Activated T-helper 2 cell treated with anti-CD3 and anti-CD28 coated beads, Interferon-gamma antibody, Interleukin-2, Interleukin-4, amounts not matched to agents 10 μg/mL and 5 μg/mL and 100 μg/mL, durations not matched to agents 14 hours and 24 hours and 36 hours (primary cell): ENCODE measurements at regions of chr2 and their contacts with region 1.

Region 1: DNA sequence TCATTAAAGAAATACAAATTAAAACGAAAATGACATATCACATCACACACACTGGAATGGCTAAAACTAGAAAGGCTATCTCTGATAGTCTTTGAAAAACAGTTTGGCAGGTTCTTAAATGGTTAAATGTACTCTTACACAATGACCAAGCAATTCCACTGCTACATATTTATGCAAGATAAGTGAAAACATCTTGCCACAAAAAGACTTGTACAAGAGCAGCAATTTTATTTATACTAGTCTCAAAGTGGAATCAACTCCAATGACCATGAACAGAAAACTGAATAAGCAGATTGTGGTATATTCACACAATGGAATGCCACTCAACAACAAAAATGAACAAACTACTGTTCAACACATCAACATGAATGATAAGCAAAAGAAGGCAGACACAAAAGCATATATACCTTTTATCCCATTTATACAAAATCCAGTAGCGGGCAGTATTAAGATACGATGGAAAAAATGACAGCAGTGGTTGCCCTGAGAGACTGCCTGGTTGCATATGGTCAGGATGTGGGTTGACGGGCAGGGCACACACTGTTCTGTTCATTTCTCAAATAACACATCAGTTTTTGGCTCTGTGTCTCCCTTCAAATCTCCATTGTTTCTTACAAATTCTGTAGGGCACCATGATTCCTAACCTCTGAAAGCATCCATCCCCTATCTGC is 25.4 kb downstream of the SP100 start:
- DNase-seq: peak; percentile 48
- H3K4me3 Mint-ChIP-seq: peak overlapping the region; percentile 46
- H3K27ac Mint-ChIP-seq: peak overlapping the region; percentile 85
- H3K4me1 Mint-ChIP-seq: peaks cover 50% of the 10 kb centered on the region
- H3K27me3 Mint-ChIP-seq: no peaks in the 10 kb centered on the region

Region 2: GRCh38 chr2:230234845-230235244 is 206.5 kb before region 1 on chr2:
- intact Hi-C with region 1: loop called (anchors 1 kb)
- DNase-seq: no peak
- H3K4me3 Mint-ChIP-seq: peak overlapping the region; percentile 73
- H3K27ac Mint-ChIP-seq: peak overlapping the region; percentile 98
- H3K4me1 Mint-ChIP-seq: peaks cover 55% of the 10 kb centered on the region
- H3K27me3 Mint-ChIP-seq: no peaks in the 10 kb centered on the region

Region 3: DNA sequence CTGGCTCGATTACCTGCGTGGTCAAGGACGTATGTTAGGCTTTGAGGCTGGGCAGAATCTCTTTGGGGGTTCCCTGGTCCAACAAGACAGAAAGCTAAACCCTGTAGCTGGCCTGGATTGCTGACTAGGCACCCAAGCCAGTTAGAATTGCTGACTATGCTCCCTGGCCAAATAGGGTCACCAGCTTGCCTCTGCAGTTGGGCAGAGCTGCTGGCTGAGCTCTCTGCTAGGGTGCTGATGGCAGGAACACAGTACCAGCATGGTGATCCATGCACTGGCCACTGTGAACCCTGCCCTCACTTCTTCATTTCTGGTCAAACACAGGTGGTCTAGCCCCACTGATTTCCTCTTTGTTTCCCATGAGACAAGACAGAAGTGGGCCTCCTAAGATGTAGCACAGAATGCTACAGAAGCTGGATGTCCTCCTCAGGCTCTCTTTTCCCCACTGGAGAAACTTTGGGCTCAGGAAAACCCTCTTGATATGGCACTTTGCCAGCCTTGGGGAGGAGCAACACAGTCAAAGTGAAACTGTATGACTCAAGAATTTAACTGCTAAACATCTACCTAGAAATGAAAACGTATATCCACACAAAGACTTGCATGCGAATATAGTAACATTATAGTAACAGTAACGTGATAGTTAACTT is 93.6 kb before region 1 on chr2:
- intact Hi-C with region 1: loop called (anchors 2 kb)
- DNase-seq: peak; percentile 45
- H3K4me3 Mint-ChIP-seq: peak overlapping the region; percentile 61
- H3K27ac Mint-ChIP-seq: peak overlapping the region; percentile 94
- H3K4me1 Mint-ChIP-seq: peaks cover 73% of the 10 kb centered on the region
- H3K27me3 Mint-ChIP-seq: no peaks in the 10 kb centered on the region

Region 4: DNA sequence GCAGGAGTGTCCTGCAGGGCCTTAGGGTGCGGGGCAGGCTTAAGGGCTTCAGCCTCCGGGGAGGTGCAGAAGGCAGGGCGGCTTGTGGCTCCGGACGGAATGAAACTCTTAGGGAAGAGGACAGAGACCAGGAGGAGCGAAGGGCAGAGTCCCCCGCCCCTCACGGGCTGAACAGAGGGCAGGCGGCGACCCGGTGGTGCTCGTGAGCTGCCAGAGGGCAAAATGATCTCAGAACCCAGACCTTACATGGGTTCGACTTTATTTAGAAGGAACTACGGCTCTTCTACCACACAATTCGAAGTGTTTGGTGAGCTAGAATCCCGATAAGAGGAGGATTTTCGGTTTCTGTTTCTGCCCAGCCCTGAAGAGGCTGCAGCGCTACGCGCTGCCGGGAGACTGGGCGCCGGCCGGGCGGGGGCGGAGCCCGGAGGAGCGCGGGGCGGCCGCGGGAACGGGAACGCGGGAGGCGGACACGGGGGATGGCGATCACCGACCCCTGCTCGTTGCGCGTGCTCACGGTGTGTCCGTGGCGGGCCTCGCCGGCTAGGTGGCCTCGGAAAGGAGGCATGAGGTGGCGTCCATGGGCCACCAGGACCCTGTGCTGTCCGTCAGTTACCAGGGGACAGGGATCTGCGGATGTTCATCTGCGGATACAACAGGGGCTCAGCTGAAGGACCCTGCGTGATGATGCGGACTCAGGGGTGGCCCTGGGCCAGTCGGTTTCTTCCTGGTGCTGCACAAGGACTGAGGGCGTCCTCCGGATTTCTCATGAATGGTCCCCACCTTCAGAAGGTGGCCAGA is 29.6 kb before region 1 on chr2:
- intact Hi-C with region 1: loop called (anchors 2 kb)
- DNase-seq: peak; percentile 74
- H3K4me3 Mint-ChIP-seq: peak overlapping the region; percentile 98
- H3K27ac Mint-ChIP-seq: peak overlapping the region; percentile 100
- H3K4me1 Mint-ChIP-seq: peaks cover 61% of the 10 kb centered on the region
- H3K27me3 Mint-ChIP-seq: no peaks in the 10 kb centered on the region

Region 5: DNA sequence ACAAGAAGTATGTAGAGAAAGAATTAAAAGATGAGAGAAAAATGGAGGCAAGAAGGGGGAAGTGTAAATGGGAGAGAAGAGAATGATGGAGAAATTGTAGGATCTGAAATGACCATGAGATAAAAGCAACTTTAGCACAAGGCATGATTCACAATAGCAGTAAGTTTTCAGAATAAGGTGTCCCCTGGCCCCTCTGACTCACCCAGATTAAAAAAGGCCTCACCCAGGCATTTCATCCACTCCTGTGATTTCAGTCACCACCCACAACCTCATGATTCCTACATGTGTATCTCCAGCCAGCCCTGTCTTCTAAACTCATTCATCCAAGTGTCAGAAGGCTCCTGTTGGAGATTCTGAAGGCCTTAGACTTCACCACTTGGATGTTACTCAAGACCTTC is 31.3 kb after region 1 on chr2:
- intact Hi-C with region 1: loop called (anchors 1 kb)
- DNase-seq: no peak
- H3K4me3 Mint-ChIP-seq: peak overlapping the region; percentile 10
- H3K27ac Mint-ChIP-seq: peak overlapping the region; percentile 91
- H3K4me1 Mint-ChIP-seq: peaks cover 44% of the 10 kb centered on the region
- H3K27me3 Mint-ChIP-seq: no peaks in the 10 kb centered on the region

Region 6: DNA sequence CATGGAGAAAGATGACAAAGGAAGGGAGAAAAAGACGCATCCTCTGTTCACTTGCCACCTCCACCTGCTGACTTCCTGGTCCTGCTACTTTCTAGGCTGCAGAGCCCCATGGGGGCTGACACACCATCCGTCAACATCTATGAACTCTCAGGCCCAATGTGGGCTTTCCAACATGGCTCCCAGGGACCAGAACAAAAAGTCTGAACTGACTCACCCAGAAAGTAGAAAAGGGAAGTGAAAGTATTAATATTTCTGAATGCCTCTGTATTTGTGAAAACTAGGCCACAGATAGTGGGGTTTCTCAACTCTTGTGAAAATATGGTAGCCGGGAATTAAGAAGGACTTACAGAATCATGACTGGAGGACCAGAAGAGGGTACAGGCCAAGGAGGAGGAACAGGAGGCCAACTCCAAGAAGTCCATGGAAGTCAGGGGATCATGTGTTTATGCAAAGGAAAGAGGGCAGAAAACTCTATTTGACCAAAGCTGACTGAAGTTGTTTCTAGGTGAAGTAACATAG is 148.2 kb after region 1 on chr2:
- intact Hi-C with region 1: loop called (anchors 10 kb)
- DNase-seq: no peak
- H3K4me3 Mint-ChIP-seq: no peak overlapping the region
- H3K27ac Mint-ChIP-seq: peak overlapping the region; percentile 35
- H3K4me1 Mint-ChIP-seq: peaks cover 45% of the 10 kb centered on the region
- H3K27me3 Mint-ChIP-seq: no peaks in the 10 kb centered on the region